ENCODE measurements at regions of chr20 and their contacts with region 1.

Region 1: GRCh38 chr20:8790442-8791074 is 278.3 kb upstream of the PLCB4 start:
- DNase-seq: peak in 1 of 2 experiments; percentile 12
- H3K4me3 ChIP-seq: no peak overlapping the region
- H3K27ac ChIP-seq: no peak overlapping the region
- H3K4me1 ChIP-seq: no peaks in the 10 kb centered on the region
- H3K27me3 ChIP-seq: peaks cover 3% of the 10 kb centered on the region; the same call in 1 of the 2 replicates
- CTCF ChIP-seq: peak; percentile 96

Region 2: GRCh38 chr20:9359561-9360308 is 569.2 kb after region 1 on chr20:
- CTCF ChIA-PET with region 1: no interaction called
- POLR2A ChIA-PET with region 1: no interaction called
- intact Hi-C with region 1: loop called (anchors 1 kb)
- DNase-seq: peak; percentile 37 to 39
- H3K4me3 ChIP-seq: no peak overlapping the region
- H3K27ac ChIP-seq: no peak overlapping the region
- H3K4me1 ChIP-seq: no peaks in the 10 kb centered on the region
- H3K27me3 ChIP-seq: no peaks in the 10 kb centered on the region
- CTCF ChIP-seq: peak; percentile 75

Region 3: GRCh38 chr20:9392892-9393857 is 602.6 kb after region 1 on chr20:
- CTCF ChIA-PET with region 1: interaction called, 8 read pairs
- POLR2A ChIA-PET with region 1: no interaction called
- intact Hi-C with region 1: loop called (anchors 1 kb)
- DNase-seq: peak in 1 of 2 experiments; percentile 54
- H3K4me3 ChIP-seq: no peak overlapping the region
- H3K27ac ChIP-seq: no peak overlapping the region
- H3K4me1 ChIP-seq: no peaks in the 10 kb centered on the region
- H3K27me3 ChIP-seq: no peaks in the 10 kb centered on the region
- CTCF ChIP-seq: peak; percentile 70

Region 4: DNA sequence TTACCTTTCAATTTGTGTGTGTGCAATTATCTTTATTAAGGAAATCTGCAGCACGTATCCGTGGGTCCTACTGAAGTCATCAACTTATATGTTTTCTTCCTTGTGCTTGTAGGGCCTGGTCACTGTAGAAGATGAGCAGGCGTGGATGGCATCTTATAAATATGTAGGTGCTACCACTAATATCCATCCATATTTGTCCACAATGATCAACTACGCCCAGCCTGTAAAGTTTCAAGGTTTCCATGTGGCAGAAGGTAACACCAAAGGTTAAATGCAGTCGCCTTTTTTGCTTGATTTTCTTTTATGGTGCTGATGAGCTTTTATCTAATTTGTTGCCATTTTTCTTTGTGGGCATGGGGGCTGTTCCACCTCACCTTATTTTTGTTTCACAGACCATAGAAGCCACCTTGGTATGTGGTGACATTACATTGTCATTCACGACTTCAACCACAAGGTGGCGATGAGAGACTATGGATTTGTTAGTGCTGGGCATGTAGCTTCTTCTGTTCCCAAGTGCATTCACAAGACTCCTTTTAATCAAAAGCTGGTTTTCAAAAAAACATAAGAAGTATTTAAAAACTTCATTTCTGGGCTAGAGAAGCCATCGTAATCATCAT is 617.4 kb after region 1 on chr20:
- CTCF ChIA-PET with region 1: no interaction called
- POLR2A ChIA-PET with region 1: no interaction called
- intact Hi-C with region 1: loop called (anchors 5 kb)
- DNase-seq: peak; percentile 46 to 57
- H3K4me3 ChIP-seq: no peak overlapping the region
- H3K27ac ChIP-seq: no peak overlapping the region
- H3K4me1 ChIP-seq: peaks cover 11% of the 10 kb centered on the region
- H3K27me3 ChIP-seq: no peaks in the 10 kb centered on the region
- CTCF ChIP-seq: peak; percentile 95